Body of pancreas (tissue), 4 donors: ENCODE measurements at regions of chr5 and their contacts with region 1.

Region 1: DNA sequence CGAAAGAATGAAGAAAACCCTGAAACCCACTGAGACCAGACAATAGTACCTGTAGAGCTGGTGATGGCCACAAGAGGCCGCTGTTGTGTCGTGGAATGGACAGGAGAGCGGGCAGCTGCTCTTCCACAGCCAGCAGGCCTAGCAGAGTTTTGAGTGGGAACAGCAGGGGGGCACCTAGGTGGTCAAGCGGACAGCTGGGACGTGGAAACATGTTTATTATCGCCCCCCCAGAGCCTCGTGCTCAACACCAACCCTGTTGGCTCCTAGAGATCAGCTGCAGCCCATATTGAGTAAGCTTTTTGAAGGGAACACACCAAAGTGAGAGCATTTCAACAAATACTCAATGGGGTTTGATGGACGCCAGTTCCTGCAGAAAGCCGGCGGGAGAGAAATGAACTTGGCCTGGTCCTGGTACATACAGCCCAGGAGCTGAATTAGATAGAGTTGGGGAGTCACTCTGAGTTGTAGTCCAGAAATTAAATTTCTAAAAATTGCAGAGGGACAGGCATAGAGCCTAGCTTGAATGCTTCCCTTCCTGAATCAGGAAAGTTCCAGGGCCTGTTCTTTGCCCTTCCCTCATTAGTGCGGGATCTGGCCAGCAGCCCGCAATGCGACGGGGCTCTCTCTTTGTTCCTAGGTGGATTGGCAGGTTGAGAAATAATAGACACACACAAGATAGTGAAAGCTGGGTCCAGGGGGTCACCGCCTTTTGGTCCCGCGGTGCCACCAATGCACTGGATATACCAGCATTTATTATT is 33.8 kb downstream of the MFAP3 start:
- DNase-seq: peak; percentile 78 to 89 (median 82)
- ATAC-seq: peak; percentile 92
- H3K4me3 ChIP-seq: no peak overlapping the region
- H3K27ac ChIP-seq: no peak overlapping the region
- H3K4me1 ChIP-seq: peaks cover 4% of the 10 kb centered on the region
- H3K27me3 ChIP-seq: no peaks in the 10 kb centered on the region
- CTCF ChIP-seq: peak; percentile 88 to 95 (median 92)
- POLR2A ChIP-seq: no peak

Region 2: DNA sequence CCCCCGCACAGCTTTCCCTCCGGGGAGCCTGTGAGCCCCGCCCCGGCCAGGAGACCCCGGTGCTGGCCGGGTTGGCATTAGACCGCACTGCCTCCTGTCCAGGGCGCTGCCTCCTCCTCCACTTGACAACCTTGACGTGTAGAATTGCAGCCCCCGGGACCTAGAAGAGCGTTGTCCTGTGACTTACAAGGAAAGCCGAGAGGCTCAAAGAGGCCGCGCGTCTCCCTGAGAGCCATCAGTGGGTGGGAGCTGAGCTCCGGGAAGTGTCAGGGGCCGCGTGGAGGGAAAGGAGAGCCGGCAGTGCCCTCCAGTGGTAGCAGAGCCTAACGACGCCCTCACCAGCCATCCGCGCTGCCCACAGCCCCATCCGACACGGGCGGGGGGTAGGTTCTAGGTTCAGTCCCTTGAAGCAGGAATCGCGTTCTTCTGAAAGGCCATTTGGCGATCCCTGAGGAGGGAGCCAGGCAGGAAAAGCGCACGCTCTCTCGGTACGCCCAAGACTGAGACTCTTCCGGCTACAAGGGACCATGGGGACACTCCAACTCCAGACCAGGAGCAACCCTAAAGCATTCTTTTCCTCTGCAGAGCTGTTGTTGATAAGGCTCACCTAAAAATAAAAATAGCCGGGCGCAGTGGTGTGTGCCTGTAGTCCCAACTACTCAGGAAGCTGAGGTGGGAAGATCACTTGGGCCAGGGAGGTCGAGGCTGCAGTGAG is 332.6 kb after region 1 on chr5:
- intact Hi-C with region 1: loop called (anchors 5 kb)
- DNase-seq: peak; percentile 76 to 84 (median 79)
- ATAC-seq: peak; percentile 96
- H3K4me3 ChIP-seq: no peak overlapping the region
- H3K27ac ChIP-seq: no peak overlapping the region
- H3K4me1 ChIP-seq: peaks cover 10% of the 10 kb centered on the region
- H3K27me3 ChIP-seq: no peaks in the 10 kb centered on the region
- CTCF ChIP-seq: peak; percentile 67 to 93 (median 85)
- POLR2A ChIP-seq: no peak